ENCODE measurements at regions of chr22 and their contacts with region 1.

Region 1: DNA sequence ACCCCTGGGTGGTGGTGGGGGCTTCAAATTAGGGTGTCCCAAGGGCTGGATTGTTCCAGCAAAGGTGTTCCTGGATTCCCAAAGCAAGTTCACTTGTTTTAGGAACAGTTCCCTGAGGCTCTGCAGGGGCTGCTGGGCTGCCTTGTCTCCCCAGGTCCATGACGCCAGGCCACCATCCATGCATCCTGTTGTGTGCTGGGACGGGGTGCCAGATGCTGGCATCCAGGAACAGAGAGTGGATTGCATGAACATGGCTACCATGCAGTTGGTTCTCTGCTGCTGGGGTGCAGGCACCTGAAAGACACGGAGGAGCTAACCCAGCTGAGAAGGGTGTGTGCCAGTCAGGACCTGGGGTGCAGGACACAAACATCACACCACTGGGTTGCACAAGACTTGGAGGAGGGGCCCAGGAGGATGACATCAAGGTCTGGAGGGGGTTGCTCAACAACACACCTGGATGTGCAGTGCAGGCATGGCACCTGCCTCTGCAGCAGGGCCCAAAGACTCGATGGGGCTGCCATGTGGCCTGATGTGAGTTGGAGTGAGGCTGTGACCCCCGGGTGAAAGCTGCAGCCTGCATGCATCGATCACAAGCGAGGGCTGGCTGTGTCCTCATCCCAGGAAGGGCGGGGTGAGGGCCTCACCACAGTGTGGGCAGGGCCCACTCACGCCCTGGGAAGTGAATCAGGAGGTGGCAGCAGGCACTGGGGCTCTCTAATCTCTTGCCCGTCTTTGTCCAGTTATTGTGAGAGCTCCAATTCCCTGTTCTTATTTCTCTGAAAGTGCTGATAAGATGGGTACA is 74.0 kb upstream of the CLDN5 start:
- DNase-seq: peak in 7 of 9 donors; percentile 20 to 57 (median 38)
- ATAC-seq: no peak
- H3K4me3 ChIP-seq: peak overlapping the region; percentile 25
- H3K4me3 Mint-ChIP-seq: peak overlapping the region; percentile 61 to 88 (median 76)
- H3K27ac ChIP-seq: peak overlapping the region; percentile 75
- H3K27ac Mint-ChIP-seq: peak overlapping the region; percentile 83 to 100 (median 97)
- H3K4me1 ChIP-seq: peaks cover 11 to 63% of the 10 kb centered on the region in 2 donors
- H3K4me1 Mint-ChIP-seq: peaks cover 40 to 95% (median 79%) of the 10 kb centered on the region in 7 donors
- H3K27me3 ChIP-seq: no peaks in the 10 kb centered on the region
- H3K27me3 Mint-ChIP-seq: no peaks in the 10 kb centered on the region

Region 2: DNA sequence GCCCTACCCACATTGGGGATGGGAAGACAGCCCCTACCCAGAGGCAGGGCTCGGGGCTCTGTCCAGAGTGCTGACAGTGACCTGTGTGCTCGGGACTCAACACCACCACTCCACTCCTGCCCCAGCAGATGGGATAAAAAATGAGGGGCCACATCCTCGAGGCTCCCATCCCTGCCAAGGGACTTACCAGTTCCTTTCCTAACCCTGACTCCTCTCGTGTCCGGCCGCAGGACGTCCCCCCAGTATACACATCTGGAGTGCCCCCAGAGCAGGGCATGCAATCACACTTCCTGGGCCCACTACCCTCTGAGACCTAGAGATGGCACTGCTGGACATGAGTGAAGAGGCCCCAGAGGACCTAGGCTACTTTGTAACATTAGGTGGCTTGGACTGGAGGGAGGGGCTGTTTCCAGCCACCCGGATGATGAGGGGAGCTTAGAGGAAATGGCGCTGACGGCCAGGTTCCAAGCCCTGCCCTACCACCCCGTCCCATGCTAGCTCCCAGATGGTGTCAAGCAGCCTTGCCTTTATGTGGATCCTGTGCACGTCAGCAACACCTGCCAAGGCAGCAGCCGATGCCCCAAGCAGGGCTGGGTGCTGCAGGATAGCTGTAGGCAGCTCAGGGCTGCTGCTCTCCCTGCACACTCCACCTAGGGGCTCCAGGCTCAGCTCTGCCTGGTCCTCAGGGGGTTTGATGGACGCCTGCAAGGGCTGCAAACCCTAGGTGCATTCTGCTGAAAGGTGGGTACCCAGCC is 562.6 kb before region 1 on chr22:
- CTCF ChIA-PET with region 1: no interaction called
- POLR2A ChIA-PET with region 1: no interaction called
- intact Hi-C with region 1: loop called in 1 of 2 experiments (anchors 5 kb)
- DNase-seq: no peak
- ATAC-seq: peak; percentile 24
- H3K4me3 ChIP-seq: no peak overlapping the region
- H3K4me3 Mint-ChIP-seq: no peak overlapping the region
- H3K27ac ChIP-seq: no peak overlapping the region
- H3K27ac Mint-ChIP-seq: peak overlapping the region in 1 of 9 donors; percentile 6
- H3K4me1 ChIP-seq: no peaks in the 10 kb centered on the region
- H3K4me1 Mint-ChIP-seq: peaks cover 0 to 11% (median 4%) of the 10 kb centered on the region in 7 donors
- H3K27me3 ChIP-seq: no peaks in the 10 kb centered on the region
- H3K27me3 Mint-ChIP-seq: peaks cover 0 to 7% (median 0%) of the 10 kb centered on the region in 5 donors

Region 3: DNA sequence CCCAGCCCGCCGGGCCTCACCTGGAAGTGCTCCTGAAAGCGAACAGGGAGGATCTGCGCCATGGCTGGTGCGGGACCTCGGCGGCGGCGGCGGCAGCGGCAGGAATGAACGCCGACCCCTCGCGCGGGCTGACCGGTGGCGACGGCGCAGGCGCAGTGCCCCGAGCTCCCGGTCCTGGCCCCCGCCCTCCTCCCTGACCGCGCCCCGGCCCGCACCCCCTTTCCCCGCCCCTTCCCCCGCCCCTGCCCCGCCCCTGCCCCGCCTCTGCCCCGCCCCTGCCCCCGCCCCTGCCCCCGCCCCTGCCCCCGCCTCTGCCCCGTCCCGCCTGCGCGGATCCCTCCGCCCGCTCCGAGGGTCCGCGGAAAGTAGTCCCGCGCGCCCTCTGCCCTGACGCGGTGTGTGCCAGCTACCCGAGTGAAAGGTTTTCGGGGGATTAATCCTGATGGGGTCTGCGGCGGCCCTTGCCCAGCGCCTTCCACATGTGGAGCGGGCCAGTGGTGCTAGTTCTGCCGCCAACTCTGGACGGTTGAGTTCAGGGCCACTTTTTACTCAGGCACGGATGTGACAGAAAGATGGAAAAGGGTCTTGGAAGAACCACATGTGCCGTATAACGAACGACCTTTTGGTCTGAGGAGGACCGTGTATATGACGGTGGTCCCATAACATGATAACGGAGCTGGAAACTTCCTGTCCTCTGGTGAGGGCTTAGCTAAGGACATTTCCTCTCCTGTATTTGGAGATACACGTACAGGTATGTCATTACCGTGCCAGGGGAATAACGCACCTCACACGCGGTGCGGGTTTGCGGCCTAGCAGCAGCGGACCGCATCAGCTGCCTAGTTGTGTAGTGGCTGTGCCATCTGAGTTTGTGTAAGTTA is 306.4 kb before region 1 on chr22 and contains the start of gene CLTCL1:
- CTCF ChIA-PET with region 1: no interaction called
- POLR2A ChIA-PET with region 1: no interaction called
- intact Hi-C with region 1: loop called in 1 of 2 experiments (anchors 2 kb)
- DNase-seq: peak; percentile 38 to 81 (median 67)
- ATAC-seq: peak; percentile 90
- H3K4me3 ChIP-seq: peak within 1 kb of the TSS; percentile 82
- H3K4me3 Mint-ChIP-seq: peak within 1 kb of the TSS; percentile 76 to 93 (median 92)
- H3K27ac ChIP-seq: peak within 1 kb of the TSS; percentile 76
- H3K27ac Mint-ChIP-seq: peak within 1 kb of the TSS; percentile 64 to 93 (median 85)
- H3K4me1 ChIP-seq: peaks cover 6 to 8% of the 10 kb centered on the region in 2 donors
- H3K4me1 Mint-ChIP-seq: peaks cover 13 to 33% (median 25%) of the 10 kb centered on the region in 7 donors
- H3K27me3 ChIP-seq: no peaks in the 10 kb centered on the region
- H3K27me3 Mint-ChIP-seq: peaks cover 5 to 55% (median 23%) of the 10 kb centered on the region in 5 donors
- total RNA-seq, gene CLTCL1: 0.22 to 3.1 (median 1.4) TPM

Region 4: GRCh38 chr22:19447388-19448075 is 150.7 kb before region 1 on chr22 and contains the start of gene C22orf39:
- CTCF ChIA-PET with region 1: no interaction called
- POLR2A ChIA-PET with region 1: interaction called, 3 read pairs
- intact Hi-C with region 1: loop called in 1 of 2 experiments (anchors 1 kb)
- DNase-seq: peak; percentile 69 to 93 (median 90)
- ATAC-seq: peak; percentile 94
- H3K4me3 ChIP-seq: peak within 1 kb of the TSS; percentile 65
- H3K4me3 Mint-ChIP-seq: peak within 1 kb of the TSS; percentile 84 to 99 (median 92)
- H3K27ac ChIP-seq: peak within 1 kb of the TSS; percentile 81
- H3K27ac Mint-ChIP-seq: peak within 1 kb of the TSS; percentile 84 to 97 (median 94)
- H3K4me1 ChIP-seq: peaks cover 18 to 26% of the 10 kb centered on the region in 2 donors
- H3K4me1 Mint-ChIP-seq: peaks cover 21 to 61% (median 48%) of the 10 kb centered on the region in 7 donors
- H3K27me3 ChIP-seq: no peaks in the 10 kb centered on the region
- H3K27me3 Mint-ChIP-seq: no peaks in the 10 kb centered on the region
- total RNA-seq, gene C22orf39: 34.2 to 44.9 (median 36.8) TPM

Region 5: GRCh38 chr22:19495562-19496323 is 102.5 kb before region 1 on chr22:
- CTCF ChIA-PET with region 1: no interaction called
- POLR2A ChIA-PET with region 1: interaction called, 3 read pairs
- intact Hi-C with region 1: loop called in 1 of 2 experiments (anchors 1 kb)
- DNase-seq: peak in 7 of 9 donors; percentile 35 to 67 (median 57)
- ATAC-seq: peak; percentile 63
- H3K4me3 ChIP-seq: no peak overlapping the region
- H3K4me3 Mint-ChIP-seq: no peak overlapping the region
- H3K27ac ChIP-seq: no peak overlapping the region
- H3K27ac Mint-ChIP-seq: peak overlapping the region; percentile 49 to 88 (median 73)
- H3K4me1 ChIP-seq: peaks cover 0 to 9% of the 10 kb centered on the region in 2 donors
- H3K4me1 Mint-ChIP-seq: peaks cover 4 to 17% (median 12%) of the 10 kb centered on the region in 7 donors
- H3K27me3 ChIP-seq: no peaks in the 10 kb centered on the region
- H3K27me3 Mint-ChIP-seq: no peaks in the 10 kb centered on the region

Region 6: GRCh38 chr22:19629720-19630419 is 31.6 kb after region 1 on chr22:
- CTCF ChIA-PET with region 1: interaction called, 8 read pairs
- POLR2A ChIA-PET with region 1: interaction called, 7 read pairs
- intact Hi-C with region 1: loop called in 1 of 2 experiments (anchors 1 kb)
- DNase-seq: peak; percentile 65 to 91 (median 86)
- ATAC-seq: peak; percentile 97
- H3K4me3 ChIP-seq: no peak overlapping the region
- H3K4me3 Mint-ChIP-seq: peak overlapping the region in 1 of 10 donors; percentile 26
- H3K27ac ChIP-seq: no peak overlapping the region
- H3K27ac Mint-ChIP-seq: peak overlapping the region in 3 of 9 donors; percentile 6 to 56 (median 43)
- H3K4me1 ChIP-seq: peaks cover 0 to 7% of the 10 kb centered on the region in 2 donors
- H3K4me1 Mint-ChIP-seq: peaks cover 3 to 22% (median 10%) of the 10 kb centered on the region in 7 donors
- H3K27me3 ChIP-seq: no peaks in the 10 kb centered on the region
- H3K27me3 Mint-ChIP-seq: peaks cover 0 to 3% (median 0%) of the 10 kb centered on the region in 5 donors

Region 7: DNA sequence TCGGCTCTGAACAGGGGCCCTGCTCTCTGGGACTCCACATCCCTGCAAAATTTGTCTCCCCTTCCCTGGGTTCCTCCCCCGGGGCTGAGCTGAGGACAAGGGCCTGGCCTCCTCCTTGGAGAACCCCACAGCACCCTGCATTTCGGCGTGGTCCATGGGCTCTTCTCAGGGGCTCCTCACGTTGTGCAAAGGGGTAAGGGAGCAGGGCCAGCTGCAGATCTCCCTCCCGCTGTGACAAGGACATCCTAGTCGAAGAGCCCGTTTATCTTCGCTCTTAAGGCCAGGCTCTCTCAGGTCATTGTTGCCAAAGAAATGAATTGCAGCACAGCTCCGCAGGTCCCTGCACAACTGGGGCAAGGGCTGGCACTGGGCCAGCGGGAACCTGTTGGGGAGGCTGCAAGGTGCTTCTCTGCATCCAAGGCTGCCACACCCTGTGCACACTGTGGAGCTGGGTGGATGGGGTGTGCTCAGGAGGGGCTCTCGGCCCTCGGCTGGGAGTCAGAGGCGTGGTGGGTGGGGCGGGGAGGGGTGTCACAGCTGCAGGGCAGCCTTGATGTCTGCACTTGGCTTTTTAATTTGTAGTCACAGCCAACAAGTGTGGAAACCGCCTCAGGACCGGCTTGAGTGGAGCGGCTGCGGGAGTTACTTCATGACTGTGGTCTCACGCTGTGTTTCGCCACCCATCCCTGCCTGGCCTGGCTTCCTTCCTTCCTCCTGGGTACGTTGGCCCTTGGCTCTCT is 89.5 kb after region 1 on chr22:
- CTCF ChIA-PET with region 1: no interaction called
- POLR2A ChIA-PET with region 1: no interaction called
- intact Hi-C with region 1: no loop called
- DNase-seq: no peak
- ATAC-seq: peak; percentile 61
- H3K4me3 ChIP-seq: no peak overlapping the region
- H3K4me3 Mint-ChIP-seq: no peak overlapping the region
- H3K27ac ChIP-seq: no peak overlapping the region
- H3K27ac Mint-ChIP-seq: no peak overlapping the region
- H3K4me1 ChIP-seq: no peaks in the 10 kb centered on the region
- H3K4me1 Mint-ChIP-seq: peaks cover 0 to 7% (median 0%) of the 10 kb centered on the region in 7 donors
- H3K27me3 ChIP-seq: no peaks in the 10 kb centered on the region
- H3K27me3 Mint-ChIP-seq: peaks cover 3 to 15% (median 5%) of the 10 kb centered on the region in 5 donors

Region 8: DNA sequence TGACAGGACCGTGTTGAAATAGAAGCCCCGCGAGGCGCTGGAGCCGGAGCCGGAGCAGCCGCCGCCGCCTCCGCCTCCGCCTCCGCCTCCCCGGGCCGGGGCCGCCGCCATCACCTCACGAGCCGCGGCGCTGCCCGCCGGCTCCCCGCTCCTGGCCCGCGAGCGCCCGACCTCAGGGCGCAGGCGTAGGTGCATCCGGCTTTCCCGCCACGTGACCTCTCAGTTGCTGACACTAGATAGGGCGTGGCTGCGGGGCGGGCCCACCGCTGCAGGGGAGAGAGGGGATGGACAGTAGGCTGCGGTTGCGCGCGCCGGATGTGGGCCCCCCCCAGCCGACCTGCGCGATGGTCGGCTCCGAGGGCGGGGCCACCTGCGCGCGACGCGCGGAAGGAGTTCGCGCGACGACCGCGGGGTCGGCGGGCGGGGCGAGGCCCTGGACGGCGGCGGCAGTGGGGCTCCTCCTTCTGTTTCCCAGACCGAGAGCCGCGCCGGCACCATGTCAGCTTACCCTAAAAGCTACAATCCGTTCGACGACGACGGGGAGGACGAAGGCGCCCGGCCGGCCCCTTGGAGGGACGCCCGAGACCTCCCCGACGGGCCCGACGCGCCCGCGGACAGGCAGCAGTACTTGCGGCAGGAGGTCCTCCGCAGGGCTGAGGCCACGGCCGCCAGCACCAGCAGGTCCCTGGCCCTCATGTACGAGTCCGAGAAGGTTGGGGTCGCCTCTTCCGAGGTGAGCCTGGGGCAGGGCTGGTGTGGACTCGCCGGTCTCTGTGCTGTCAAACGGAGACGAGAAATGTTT is 1260.6 kb after region 1 on chr22 and contains the starts of genes PI4KA and SNAP29:
- CTCF ChIA-PET with region 1: no interaction called
- POLR2A ChIA-PET with region 1: no interaction called
- intact Hi-C with region 1: loop called in 1 of 2 experiments (anchors 2 kb)
- DNase-seq: peak; percentile 92 to 98 (median 96)
- ATAC-seq: peak; percentile 97
- H3K4me3 ChIP-seq: peak within 1 kb of the TSS; percentile 78
- H3K4me3 Mint-ChIP-seq: peak within 1 kb of the TSS; percentile 87 to 95 (median 92)
- H3K27ac ChIP-seq: peak within 1 kb of the TSS; percentile 87
- H3K27ac Mint-ChIP-seq: peak within 1 kb of the TSS; percentile 60 to 92 (median 88)
- H3K4me1 ChIP-seq: peaks cover 17 to 20% of the 10 kb centered on the region in 2 donors
- H3K4me1 Mint-ChIP-seq: peaks cover 38 to 76% (median 58%) of the 10 kb centered on the region in 7 donors
- H3K27me3 ChIP-seq: no peaks in the 10 kb centered on the region
- H3K27me3 Mint-ChIP-seq: no peaks in the 10 kb centered on the region
- total RNA-seq, gene PI4KA: 120 to 181 (median 168) TPM
- total RNA-seq, gene SNAP29: 15.2 to 32.8 (median 25.4) TPM